Upper lobe of right lung (tissue), 1 donor: ENCODE measurements at regions of chr5 and their contacts with region 1.

Region 1: GRCh38 chr5:131979816-131980215 is 31.6 kb downstream of the ACSL6 start:
- DNase-seq: peak; percentile 16
- ATAC-seq: no peak
- H3K4me3 ChIP-seq: no peak overlapping the region
- H3K27ac ChIP-seq: no peak overlapping the region
- H3K4me1 ChIP-seq: peaks cover 3% of the 10 kb centered on the region
- H3K27me3 ChIP-seq: no peaks in the 10 kb centered on the region
- CTCF ChIP-seq: no peak

Region 2: GRCh38 chr5:131810510-131811249 is 169.1 kb before region 1 on chr5:
- intact Hi-C with region 1: loop called (anchors 2 kb)
- DNase-seq: no peak
- ATAC-seq: no peak
- H3K4me3 ChIP-seq: no peak overlapping the region
- H3K27ac ChIP-seq: no peak overlapping the region
- H3K4me1 ChIP-seq: no peaks in the 10 kb centered on the region
- H3K27me3 ChIP-seq: no peaks in the 10 kb centered on the region
- CTCF ChIP-seq: no peak

Region 3: DNA sequence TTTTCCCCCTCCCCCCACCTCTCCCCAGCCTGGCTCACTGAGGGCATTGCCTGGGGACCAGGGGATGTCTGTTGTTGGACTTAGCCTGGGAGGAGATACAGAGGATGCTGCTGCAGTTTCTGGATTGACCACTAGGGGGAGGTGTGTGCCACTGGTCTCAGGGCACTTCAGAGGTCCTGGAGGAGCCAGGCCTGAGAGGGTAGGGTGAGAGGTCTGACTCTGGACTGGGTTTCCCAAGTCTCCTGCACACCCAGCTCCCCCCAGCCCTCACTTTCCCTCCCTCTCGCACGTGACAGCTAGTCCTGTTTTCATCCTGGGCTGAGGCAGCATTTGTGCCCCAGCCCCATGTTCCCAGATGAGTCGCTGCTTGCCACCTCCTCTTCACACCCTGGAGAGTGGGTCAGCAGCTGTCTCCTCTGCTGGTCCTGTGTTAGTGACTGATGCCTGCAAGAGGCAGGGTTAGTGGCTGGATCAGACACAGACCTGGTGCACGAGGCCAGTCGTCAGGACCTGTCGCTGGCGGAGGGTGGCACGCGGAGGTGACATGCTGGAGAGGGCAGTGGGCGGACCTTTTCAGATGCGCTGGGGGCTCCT is 85.0 kb after region 1 on chr5:
- intact Hi-C with region 1: no loop called
- DNase-seq: peak; percentile 82
- ATAC-seq: peak; percentile 90
- H3K4me3 ChIP-seq: no peak overlapping the region
- H3K27ac ChIP-seq: no peak overlapping the region
- H3K4me1 ChIP-seq: no peaks in the 10 kb centered on the region
- H3K27me3 ChIP-seq: no peaks in the 10 kb centered on the region
- CTCF ChIP-seq: peak; percentile 95